Ascending aorta (tissue), 2 donors: ENCODE measurements at regions of chr1 and their contacts with region 1.

Region 1: GRCh38 chr1:21898326-21899200 is 38.5 kb downstream of the HSPG2 start:
- DNase-seq: peak in 1 of 2 donors; percentile 83
- H3K4me3 ChIP-seq: no peak overlapping the region
- H3K27ac ChIP-seq: peak overlapping the region; percentile 94 to 96
- H3K4me1 ChIP-seq: peaks cover 61 to 93% of the 10 kb centered on the region in 2 donors
- H3K27me3 ChIP-seq: no peaks in the 10 kb centered on the region
- CTCF ChIP-seq: peak in 1 of 3 experiments; percentile 10

Region 2: DNA sequence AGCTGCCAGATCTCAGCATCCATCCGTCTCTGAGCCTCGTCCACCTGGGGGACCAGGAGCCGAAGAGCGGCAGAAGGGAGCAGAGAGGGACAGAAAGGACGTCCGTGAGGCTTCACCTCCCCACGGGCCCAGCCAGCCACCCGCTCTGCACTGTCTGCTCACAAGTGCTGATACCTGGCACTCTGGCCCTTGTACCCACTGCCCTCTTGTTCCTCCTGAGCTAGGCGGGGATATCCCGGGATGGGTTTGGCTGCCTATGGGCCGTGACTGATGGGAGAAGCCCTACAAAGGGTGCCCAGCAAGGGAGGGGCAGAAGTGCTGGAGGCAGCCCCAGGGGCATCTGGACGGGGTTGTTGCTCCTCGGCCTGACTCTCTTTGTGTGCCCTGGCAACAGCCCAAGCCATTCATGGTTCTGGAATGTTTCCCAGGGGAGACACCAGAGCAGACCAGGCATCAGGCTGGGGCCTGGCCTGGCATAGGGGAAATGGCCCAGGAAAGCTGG is 28.9 kb before region 1 on chr1:
- intact Hi-C with region 1: loop called (anchors 1 kb)
- DNase-seq: peak; percentile 70 to 97
- H3K4me3 ChIP-seq: no peak overlapping the region
- H3K27ac ChIP-seq: peak overlapping the region; percentile 76 to 83
- H3K4me1 ChIP-seq: peaks cover 17% of the 10 kb centered on the region in 2 donors
- H3K27me3 ChIP-seq: no peaks in the 10 kb centered on the region
- CTCF ChIP-seq: no peak

Region 3: GRCh38 chr1:21963477-21964217 is 65.1 kb after region 1 on chr1:
- intact Hi-C with region 1: loop called (anchors 1 kb)
- DNase-seq: peak in 1 of 2 donors; percentile 89
- H3K4me3 ChIP-seq: no peak overlapping the region
- H3K27ac ChIP-seq: no peak overlapping the region
- H3K4me1 ChIP-seq: no peaks in the 10 kb centered on the region
- H3K27me3 ChIP-seq: no peaks in the 10 kb centered on the region
- CTCF ChIP-seq: peak; percentile 89 to 95 (median 92)